Naive thymus-derived CD4-positive, alpha-beta T cell (primary cell): ENCODE measurements at regions of chr2 and their contacts with region 1.

Region 1: GRCh38 chr2:41840702-41841551 is 206.9 kb upstream of the PKDCC start:
- DNase-seq: peak; percentile 93 to 98 (median 97)
- ATAC-seq: peak; percentile 99
- H3K4me3 ChIP-seq: peak overlapping the region; percentile 90
- H3K4me3 Mint-ChIP-seq: peak overlapping the region; percentile 90 to 99 (median 95)
- H3K27ac ChIP-seq: peak overlapping the region; percentile 83
- H3K27ac Mint-ChIP-seq: peak overlapping the region; percentile 84 to 99 (median 96)
- H3K4me1 ChIP-seq: peaks cover 0 to 5% of the 10 kb centered on the region in 2 donors
- H3K4me1 Mint-ChIP-seq: peaks cover 6 to 16% (median 10%) of the 10 kb centered on the region in 7 donors
- H3K27me3 ChIP-seq: no peaks in the 10 kb centered on the region
- H3K27me3 Mint-ChIP-seq: peaks cover 18 to 34% (median 24%) of the 10 kb centered on the region in 5 donors

Region 2: DNA sequence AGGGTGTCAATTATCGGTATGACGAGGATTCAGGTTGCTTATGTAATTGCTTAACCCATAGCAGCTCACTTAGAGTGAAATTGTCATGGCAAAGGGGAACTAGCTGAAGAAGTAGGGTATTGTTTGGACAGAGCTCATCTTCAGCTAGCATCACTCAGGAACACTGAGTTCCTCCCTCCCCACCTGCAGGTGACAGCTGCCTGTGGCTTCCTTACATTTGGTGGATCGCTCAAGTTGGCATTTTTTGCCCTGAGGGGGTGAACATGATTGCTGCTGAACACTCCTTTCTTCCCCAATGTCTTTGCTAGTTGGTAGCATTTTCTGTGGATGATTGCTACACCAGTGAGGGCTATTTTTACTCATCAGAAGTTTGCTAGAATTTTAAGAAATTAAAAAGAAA is 1975.2 kb before region 1 on chr2:
- CTCF ChIA-PET with region 1: no interaction called
- POLR2A ChIA-PET with region 1: no interaction called
- intact Hi-C with region 1: no loop called
- DNase-seq: no peak
- ATAC-seq: no peak
- H3K4me3 ChIP-seq: no peak overlapping the region
- H3K4me3 Mint-ChIP-seq: no peak overlapping the region
- H3K27ac ChIP-seq: no peak overlapping the region
- H3K27ac Mint-ChIP-seq: no peak overlapping the region
- H3K4me1 ChIP-seq: no peaks in the 10 kb centered on the region
- H3K4me1 Mint-ChIP-seq: no peaks in the 10 kb centered on the region
- H3K27me3 ChIP-seq: no peaks in the 10 kb centered on the region
- H3K27me3 Mint-ChIP-seq: peaks cover 0 to 20% (median 9%) of the 10 kb centered on the region in 5 donors

Region 3: GRCh38 chr2:41814963-41815362 is 26.0 kb before region 1 on chr2:
- CTCF ChIA-PET with region 1: no interaction called
- POLR2A ChIA-PET with region 1: no interaction called
- intact Hi-C with region 1: no loop called
- DNase-seq: no peak
- ATAC-seq: no peak
- H3K4me3 ChIP-seq: no peak overlapping the region
- H3K4me3 Mint-ChIP-seq: no peak overlapping the region
- H3K27ac ChIP-seq: no peak overlapping the region
- H3K27ac Mint-ChIP-seq: no peak overlapping the region
- H3K4me1 ChIP-seq: no peaks in the 10 kb centered on the region
- H3K4me1 Mint-ChIP-seq: no peaks in the 10 kb centered on the region
- H3K27me3 ChIP-seq: no peaks in the 10 kb centered on the region
- H3K27me3 Mint-ChIP-seq: peaks cover 4 to 52% (median 38%) of the 10 kb centered on the region in 5 donors

Region 4: GRCh38 chr2:41869542-41870264 is 28.8 kb after region 1 on chr2:
- CTCF ChIA-PET with region 1: interaction called, 3 read pairs
- POLR2A ChIA-PET with region 1: no interaction called
- intact Hi-C with region 1: loop called in 1 of 2 experiments (anchors 1 kb)
- DNase-seq: peak; percentile 31 to 64 (median 52)
- ATAC-seq: peak; percentile 79
- H3K4me3 ChIP-seq: no peak overlapping the region
- H3K4me3 Mint-ChIP-seq: no peak overlapping the region
- H3K27ac ChIP-seq: no peak overlapping the region
- H3K27ac Mint-ChIP-seq: no peak overlapping the region
- H3K4me1 ChIP-seq: no peaks in the 10 kb centered on the region
- H3K4me1 Mint-ChIP-seq: peaks cover 0 to 13% (median 0%) of the 10 kb centered on the region in 7 donors
- H3K27me3 ChIP-seq: no peaks in the 10 kb centered on the region
- H3K27me3 Mint-ChIP-seq: peaks cover 0 to 22% (median 0%) of the 10 kb centered on the region in 5 donors

Region 5: DNA sequence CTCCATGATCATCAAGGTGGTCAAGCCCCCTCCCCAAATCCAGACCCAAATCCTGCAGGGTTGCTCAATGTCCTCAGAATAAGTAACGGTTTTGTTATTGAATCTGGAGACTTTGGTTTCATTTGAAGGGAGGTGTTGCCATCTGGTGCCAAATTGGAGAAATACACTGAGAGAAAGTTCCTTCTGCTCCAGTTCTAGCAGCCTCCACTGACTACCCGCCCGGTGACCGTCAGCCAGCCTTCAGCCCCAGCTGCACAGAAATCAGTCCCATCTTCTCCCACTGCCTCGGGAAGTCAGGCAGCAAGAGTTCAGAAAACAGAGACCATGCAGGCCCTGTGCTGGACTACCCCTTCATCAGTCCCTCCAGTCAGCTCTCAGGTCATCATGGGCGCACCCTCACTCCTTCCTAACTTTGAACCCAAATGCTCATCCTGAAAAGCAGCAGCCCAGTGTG is 245.6 kb after region 1 on chr2:
- CTCF ChIA-PET with region 1: interaction called, 5 read pairs
- POLR2A ChIA-PET with region 1: interaction called, 5 read pairs
- intact Hi-C with region 1: loop called (anchors 1 kb)
- DNase-seq: peak in 7 of 9 donors; percentile 18 to 59 (median 50)
- ATAC-seq: peak; percentile 62
- H3K4me3 ChIP-seq: no peak overlapping the region
- H3K4me3 Mint-ChIP-seq: no peak overlapping the region
- H3K27ac ChIP-seq: no peak overlapping the region
- H3K27ac Mint-ChIP-seq: no peak overlapping the region
- H3K4me1 ChIP-seq: no peaks in the 10 kb centered on the region
- H3K4me1 Mint-ChIP-seq: peaks cover 0 to 10% (median 7%) of the 10 kb centered on the region in 7 donors
- H3K27me3 ChIP-seq: no peaks in the 10 kb centered on the region
- H3K27me3 Mint-ChIP-seq: peaks cover 0 to 25% (median 6%) of the 10 kb centered on the region in 5 donors

Region 6: GRCh38 chr2:42196403-42197267 is 355.7 kb after region 1 on chr2:
- CTCF ChIA-PET with region 1: no interaction called
- POLR2A ChIA-PET with region 1: no interaction called
- intact Hi-C with region 1: loop called (anchors 1 to 5 kb)
- DNase-seq: peak in 7 of 9 donors; percentile 56 to 75 (median 68)
- ATAC-seq: peak; percentile 91
- H3K4me3 ChIP-seq: no peak overlapping the region
- H3K4me3 Mint-ChIP-seq: peak overlapping the region in 9 of 10 donors; percentile 1 to 66 (median 41)
- H3K27ac ChIP-seq: peak overlapping the region; percentile 22
- H3K27ac Mint-ChIP-seq: peak overlapping the region in 8 of 9 donors; percentile 17 to 91 (median 74)
- H3K4me1 ChIP-seq: peaks cover 42 to 48% of the 10 kb centered on the region in 2 donors
- H3K4me1 Mint-ChIP-seq: peaks cover 54 to 93% (median 84%) of the 10 kb centered on the region in 7 donors
- H3K27me3 ChIP-seq: no peaks in the 10 kb centered on the region
- H3K27me3 Mint-ChIP-seq: no peaks in the 10 kb centered on the region

Region 7: GRCh38 chr2:42328148-42328833 is 487.4 kb after region 1 on chr2:
- CTCF ChIA-PET with region 1: interaction called, 3 read pairs
- POLR2A ChIA-PET with region 1: no interaction called
- intact Hi-C with region 1: loop called in 1 of 2 experiments (anchors 1 kb)
- DNase-seq: peak in 5 of 9 donors; percentile 13 to 34 (median 32)
- ATAC-seq: peak; percentile 57
- H3K4me3 ChIP-seq: no peak overlapping the region
- H3K4me3 Mint-ChIP-seq: no peak overlapping the region
- H3K27ac ChIP-seq: no peak overlapping the region
- H3K27ac Mint-ChIP-seq: peak overlapping the region in 7 of 9 donors; percentile 12 to 77 (median 57)
- H3K4me1 ChIP-seq: no peaks in the 10 kb centered on the region
- H3K4me1 Mint-ChIP-seq: peaks cover 0 to 5% (median 0%) of the 10 kb centered on the region in 7 donors
- H3K27me3 ChIP-seq: no peaks in the 10 kb centered on the region
- H3K27me3 Mint-ChIP-seq: no peaks in the 10 kb centered on the region

Region 8: GRCh38 chr2:42568401-42569115 is 727.6 kb after region 1 on chr2 and contains the start of gene MTA3:
- CTCF ChIA-PET with region 1: no interaction called
- POLR2A ChIA-PET with region 1: no interaction called
- intact Hi-C with region 1: loop called in 1 of 2 experiments (anchors 2 kb)
- DNase-seq: peak; percentile 51 to 76 (median 67)
- ATAC-seq: peak; percentile 85
- H3K4me3 ChIP-seq: peak within 1 kb of the TSS; percentile 52
- H3K4me3 Mint-ChIP-seq: peak within 1 kb of the TSS; percentile 89 to 99 (median 94)
- H3K27ac ChIP-seq: peak within 1 kb of the TSS; percentile 74
- H3K27ac Mint-ChIP-seq: peak within 1 kb of the TSS; percentile 88 to 97 (median 94)
- H3K4me1 ChIP-seq: peaks cover 8 to 19% of the 10 kb centered on the region in 2 donors
- H3K4me1 Mint-ChIP-seq: peaks cover 11 to 50% (median 41%) of the 10 kb centered on the region in 7 donors
- H3K27me3 ChIP-seq: no peaks in the 10 kb centered on the region
- H3K27me3 Mint-ChIP-seq: no peaks in the 10 kb centered on the region
- total RNA-seq, gene MTA3: 23.9 to 49.1 (median 34.3) TPM